ENCODE measurements at regions of chr20 and their contacts with region 1.

Region 1: DNA sequence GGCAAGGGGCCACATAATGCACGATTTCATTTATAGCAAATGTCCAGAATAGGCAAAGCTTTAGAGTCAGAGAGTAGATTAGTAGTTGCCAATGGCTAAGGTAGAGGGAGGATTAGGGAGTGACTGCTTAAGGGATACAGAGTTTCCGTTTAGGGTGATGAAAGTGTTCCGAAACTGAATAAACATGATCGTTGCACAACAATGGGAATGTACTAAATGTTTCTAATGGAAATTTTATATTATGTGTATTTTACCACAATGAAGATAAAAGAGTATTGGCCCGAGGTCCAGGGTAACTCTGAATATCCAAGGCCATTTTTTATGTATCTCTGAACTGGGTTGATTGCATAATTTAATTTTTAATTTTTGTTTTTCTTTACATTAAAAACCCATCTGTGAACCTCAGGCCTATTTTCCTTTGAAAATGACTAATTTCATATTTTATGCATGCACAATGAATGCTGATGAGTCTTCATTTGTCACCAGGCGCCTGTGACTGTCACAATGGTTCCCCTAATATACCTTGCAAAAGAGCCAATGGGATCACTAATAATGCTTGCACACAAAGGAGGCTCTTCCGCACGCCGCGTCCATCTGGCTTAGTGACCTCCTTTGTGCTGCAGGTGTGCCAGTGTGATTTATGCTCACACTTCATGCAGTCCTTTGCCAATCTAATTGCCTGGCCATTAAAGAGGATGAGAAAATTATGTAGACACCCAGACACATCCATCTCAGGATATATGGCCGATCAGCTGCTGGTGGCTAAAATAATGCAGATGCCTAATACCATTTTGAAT is 612.5 kb downstream of the CDH26 start:
- DNase-seq: no peak
- H3K4me3 ChIP-seq: no peak overlapping the region
- H3K4me3 Mint-ChIP-seq: no peak overlapping the region
- H3K27ac ChIP-seq: no peak overlapping the region
- H3K27ac Mint-ChIP-seq: no peak overlapping the region
- H3K4me1 ChIP-seq: no peaks in the 10 kb centered on the region
- H3K4me1 Mint-ChIP-seq: no peaks in the 10 kb centered on the region
- H3K27me3 ChIP-seq: no peaks in the 10 kb centered on the region
- H3K27me3 Mint-ChIP-seq: peaks cover under 1 to 3% (median 2%) of the 10 kb centered on the region in 3 donors
- CTCF ChIP-seq: no peak

Region 2: GRCh38 chr20:60540591-60540990 is 30.1 kb before region 1 on chr20:
- intact Hi-C with region 1: loop called in 1 of 2 experiments (anchors 2 kb)
- DNase-seq: no peak
- H3K4me3 ChIP-seq: no peak overlapping the region
- H3K4me3 Mint-ChIP-seq: no peak overlapping the region
- H3K27ac ChIP-seq: no peak overlapping the region
- H3K27ac Mint-ChIP-seq: no peak overlapping the region
- H3K4me1 ChIP-seq: no peaks in the 10 kb centered on the region
- H3K4me1 Mint-ChIP-seq: no peaks in the 10 kb centered on the region
- H3K27me3 ChIP-seq: no peaks in the 10 kb centered on the region
- H3K27me3 Mint-ChIP-seq: peaks cover 2 to 14% (median 4%) of the 10 kb centered on the region in 3 donors
- CTCF ChIP-seq: no peak

Region 3: GRCh38 chr20:60630609-60631008 is 59.9 kb after region 1 on chr20:
- intact Hi-C with region 1: no loop called
- DNase-seq: no peak
- H3K4me3 ChIP-seq: no peak overlapping the region
- H3K4me3 Mint-ChIP-seq: no peak overlapping the region
- H3K27ac ChIP-seq: no peak overlapping the region
- H3K27ac Mint-ChIP-seq: no peak overlapping the region
- H3K4me1 ChIP-seq: no peaks in the 10 kb centered on the region
- H3K4me1 Mint-ChIP-seq: no peaks in the 10 kb centered on the region
- H3K27me3 ChIP-seq: no peaks in the 10 kb centered on the region
- H3K27me3 Mint-ChIP-seq: peaks cover 0 to 5% (median 1%) of the 10 kb centered on the region in 3 donors
- CTCF ChIP-seq: no peak

Region 4: GRCh38 chr20:60642541-60642940 is 71.9 kb after region 1 on chr20:
- intact Hi-C with region 1: no loop called
- DNase-seq: no peak
- H3K4me3 ChIP-seq: no peak overlapping the region
- H3K4me3 Mint-ChIP-seq: no peak overlapping the region
- H3K27ac ChIP-seq: no peak overlapping the region
- H3K27ac Mint-ChIP-seq: no peak overlapping the region
- H3K4me1 ChIP-seq: no peaks in the 10 kb centered on the region
- H3K4me1 Mint-ChIP-seq: no peaks in the 10 kb centered on the region
- H3K27me3 ChIP-seq: peaks cover 0 to 2% of the 10 kb centered on the region in 2 donors
- H3K27me3 Mint-ChIP-seq: peaks cover 0 to 2% (median 0%) of the 10 kb centered on the region in 3 donors
- CTCF ChIP-seq: no peak

Region 5: DNA sequence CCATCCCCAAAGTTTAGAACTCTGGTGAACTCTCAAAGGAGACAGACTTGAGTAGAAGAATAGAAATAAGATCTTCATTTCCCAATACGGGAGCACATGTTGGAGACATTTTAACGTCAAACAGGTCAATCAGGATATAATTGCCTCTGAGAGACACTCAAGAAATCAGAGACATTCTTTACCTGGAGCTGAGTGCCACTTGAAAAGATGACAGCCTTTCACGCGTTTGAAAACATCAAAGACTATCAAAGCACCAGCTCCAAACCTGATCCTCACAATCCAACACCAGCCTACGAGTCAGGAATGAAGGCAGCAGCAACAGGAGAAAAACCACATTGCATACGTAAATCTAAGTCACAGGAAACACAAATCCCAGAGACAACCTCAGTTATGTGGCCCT is 109.9 kb after region 1 on chr20:
- intact Hi-C with region 1: no loop called
- DNase-seq: no peak
- H3K4me3 ChIP-seq: no peak overlapping the region
- H3K4me3 Mint-ChIP-seq: no peak overlapping the region
- H3K27ac ChIP-seq: no peak overlapping the region
- H3K27ac Mint-ChIP-seq: no peak overlapping the region
- H3K4me1 ChIP-seq: no peaks in the 10 kb centered on the region
- H3K4me1 Mint-ChIP-seq: no peaks in the 10 kb centered on the region
- H3K27me3 ChIP-seq: no peaks in the 10 kb centered on the region
- H3K27me3 Mint-ChIP-seq: peaks cover 3 to 8% (median 4%) of the 10 kb centered on the region in 3 donors
- CTCF ChIP-seq: no peak

Region 6: GRCh38 chr20:60921022-60921622 is 350.4 kb after region 1 on chr20:
- intact Hi-C with region 1: no loop called
- DNase-seq: no peak
- H3K4me3 ChIP-seq: no peak overlapping the region
- H3K4me3 Mint-ChIP-seq: no peak overlapping the region
- H3K27ac ChIP-seq: no peak overlapping the region
- H3K27ac Mint-ChIP-seq: no peak overlapping the region
- H3K4me1 ChIP-seq: no peaks in the 10 kb centered on the region
- H3K4me1 Mint-ChIP-seq: no peaks in the 10 kb centered on the region
- H3K27me3 ChIP-seq: no peaks in the 10 kb centered on the region
- H3K27me3 Mint-ChIP-seq: peaks cover 0 to 2% (median 1%) of the 10 kb centered on the region in 3 donors
- CTCF ChIP-seq: no peak

Measured in CD14-positive monocyte (primary cell).